Cardiac septum (tissue), 1 donor: ENCODE measurements at regions of chr3 and their contacts with region 1.

Region 1: GRCh38 chr3:156151824-156152428 is 31.5 kb downstream of the KCNAB1 start:
- DNase-seq: no peak

Region 2: GRCh38 chr3:156174229-156174847 is 22.4 kb after region 1 on chr3:
- intact Hi-C with region 1: no loop called
- DNase-seq: no peak

Region 3: GRCh38 chr3:156201411-156202405 is 49.8 kb after region 1 on chr3:
- intact Hi-C with region 1: no loop called
- DNase-seq: no peak

Region 4: GRCh38 chr3:156356537-156357363 is 204.8 kb after region 1 on chr3:
- intact Hi-C with region 1: no loop called
- DNase-seq: no peak

Region 5: DNA sequence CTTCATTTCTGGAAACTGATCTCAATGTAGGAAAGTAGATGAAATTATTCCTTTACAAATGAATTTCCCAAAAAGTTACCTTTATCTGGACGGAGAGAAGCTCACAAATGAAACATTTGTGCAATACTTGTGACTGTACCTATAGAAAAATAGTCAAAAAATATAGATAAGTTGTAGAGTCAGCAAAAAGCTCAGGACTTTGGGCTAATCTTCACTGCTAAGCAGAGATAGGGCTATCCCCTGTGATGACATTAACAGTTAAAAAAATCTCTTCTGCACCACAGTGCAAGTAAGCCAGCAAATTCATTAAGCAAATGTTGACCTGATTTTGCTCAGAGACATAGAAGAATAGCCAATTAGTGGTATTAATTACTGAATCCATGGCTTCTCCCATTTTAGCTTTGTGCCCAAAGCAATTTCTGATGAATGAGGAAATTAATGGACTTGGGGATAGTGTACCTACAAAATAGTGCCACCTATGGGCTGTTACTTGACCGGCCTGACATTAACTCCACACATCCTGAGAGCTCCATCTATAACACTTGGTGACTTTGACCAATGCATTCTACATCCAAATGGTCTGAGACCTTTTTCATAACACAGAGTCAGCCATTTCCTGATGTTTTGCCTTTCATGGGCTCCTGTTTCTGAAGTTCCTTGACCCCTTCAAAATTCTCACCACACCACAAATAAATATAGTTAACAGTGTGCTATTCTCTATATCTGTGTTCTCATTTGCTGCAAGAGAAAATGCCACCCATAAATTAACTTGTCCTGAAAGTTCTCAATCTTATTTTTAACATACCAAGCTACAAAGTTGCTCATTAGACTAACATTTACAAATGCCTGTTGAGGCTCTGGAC is 298.0 kb after region 1 on chr3:
- intact Hi-C with region 1: loop called (anchors 2 kb)
- DNase-seq: no peak

Region 6: GRCh38 chr3:156509189-156510174 is 357.6 kb after region 1 on chr3:
- intact Hi-C with region 1: loop called (anchors 2 kb)
- DNase-seq: no peak

Region 7: GRCh38 chr3:157142315-157142714 is 990.4 kb after region 1 on chr3:
- intact Hi-C with region 1: loop called (anchors 5 kb)
- DNase-seq: no peak